A549 (cell line): ENCODE measurements at regions of chr22 and their contacts with region 1.

Region 1: DNA sequence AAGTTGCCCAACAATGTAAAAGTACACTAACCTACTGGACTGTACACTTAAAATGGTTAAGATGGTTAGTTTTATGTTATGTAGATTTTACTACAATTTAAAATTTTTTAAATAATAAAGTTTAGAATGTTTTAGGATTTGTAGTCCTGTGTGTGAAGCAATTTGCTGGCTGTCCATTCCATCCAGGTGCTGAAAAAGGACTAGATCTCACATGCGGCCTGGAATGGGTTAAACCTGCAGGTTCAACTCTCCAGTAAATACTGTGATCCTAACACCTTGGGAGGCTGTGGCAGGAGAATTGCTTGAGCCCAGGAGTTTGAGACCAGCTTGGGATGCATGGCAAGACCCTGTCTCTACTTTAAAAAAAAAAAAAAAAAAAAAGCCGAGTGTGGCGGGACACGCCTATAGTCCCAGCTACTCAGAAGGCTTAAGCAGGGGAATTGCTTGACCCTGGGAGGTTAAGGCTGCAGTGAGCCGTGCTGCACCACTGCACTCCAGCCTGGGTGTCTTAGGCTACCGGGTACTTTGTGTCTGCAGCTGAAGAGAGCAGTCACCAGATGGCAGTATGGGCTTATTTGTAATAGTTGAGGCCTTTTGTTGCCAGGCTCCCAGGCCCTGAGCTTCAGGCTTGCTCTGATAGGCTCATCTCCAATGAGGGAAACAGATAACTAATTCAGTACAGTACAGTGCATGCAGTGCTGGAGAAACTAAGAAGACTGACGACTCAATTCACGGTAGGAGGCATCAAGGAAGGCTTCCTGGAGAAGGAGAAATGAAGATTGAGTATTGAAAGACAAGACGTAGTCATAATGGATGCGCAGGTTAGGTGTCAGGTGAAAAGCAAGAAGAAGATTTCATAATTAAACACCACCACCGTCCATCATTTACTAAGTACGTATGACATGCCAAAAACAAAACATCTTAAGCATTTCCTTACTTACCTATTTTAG is 64.7 kb upstream of the ASPHD2 start:
- DNase-seq: peak; percentile 36 to 81
- ATAC-seq: peak; percentile 90 to 96
- H3K4me3 ChIP-seq: no peak overlapping the region
- H3K27ac ChIP-seq: no peak overlapping the region
- H3K4me1 ChIP-seq: no peaks in the 10 kb centered on the region
- CTCF ChIP-seq: peak; percentile 56
- EP300 ChIP-seq: no peak
- POLR2A ChIP-seq: no peak
- RAD21 ChIP-seq: peak; percentile 66 to 72

Region 2: GRCh38 chr22:26245001-26245400 is 119.3 kb before region 1 on chr22:
- CTCF ChIA-PET with region 1: no interaction called
- POLR2A ChIA-PET with region 1: no interaction called
- DNase-seq: no peak
- ATAC-seq: no peak
- H3K4me3 ChIP-seq: no peak overlapping the region
- H3K27ac ChIP-seq: no peak overlapping the region
- H3K4me1 ChIP-seq: no peaks in the 10 kb centered on the region
- CTCF ChIP-seq: no peak
- EP300 ChIP-seq: no peak
- POLR2A ChIP-seq: no peak
- RAD21 ChIP-seq: no peak

Region 3: GRCh38 chr22:26374391-26375026 is 10.2 kb after region 1 on chr22:
- CTCF ChIA-PET with region 1: interaction called, 25 read pairs
- POLR2A ChIA-PET with region 1: no interaction called
- DNase-seq: no peak
- ATAC-seq: no peak
- H3K4me3 ChIP-seq: no peak overlapping the region
- H3K27ac ChIP-seq: no peak overlapping the region
- H3K4me1 ChIP-seq: no peaks in the 10 kb centered on the region
- CTCF ChIP-seq: no peak
- EP300 ChIP-seq: no peak
- POLR2A ChIP-seq: no peak
- RAD21 ChIP-seq: no peak

Region 4: DNA sequence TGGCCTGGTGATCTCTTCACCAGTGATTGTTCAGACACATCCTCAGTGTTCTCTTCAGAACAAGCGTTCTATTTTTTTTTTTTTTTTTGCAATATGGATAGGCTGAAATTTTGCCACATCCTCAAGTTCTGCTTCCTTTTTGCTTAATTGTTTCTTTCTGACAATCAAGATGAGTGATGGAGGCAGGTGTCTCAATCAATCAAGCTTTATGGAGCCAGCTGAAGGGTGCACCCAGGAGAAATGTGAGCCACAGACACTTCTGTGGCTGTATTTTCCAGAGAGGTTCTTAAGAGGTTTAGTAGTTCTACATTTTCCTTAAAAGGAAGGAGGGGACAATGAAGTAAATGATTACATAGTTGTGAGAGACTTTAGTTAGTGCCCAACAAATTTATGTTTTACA is 20.8 kb after region 1 on chr22:
- CTCF ChIA-PET with region 1: interaction called, 18 read pairs
- POLR2A ChIA-PET with region 1: no interaction called
- DNase-seq: no peak
- ATAC-seq: no peak
- H3K4me3 ChIP-seq: no peak overlapping the region
- H3K27ac ChIP-seq: no peak overlapping the region
- H3K4me1 ChIP-seq: no peaks in the 10 kb centered on the region
- CTCF ChIP-seq: no peak
- EP300 ChIP-seq: no peak
- POLR2A ChIP-seq: no peak
- RAD21 ChIP-seq: no peak

Region 5: GRCh38 chr22:26398741-26399153 is 34.4 kb after region 1 on chr22:
- CTCF ChIA-PET with region 1: interaction called, 15 read pairs
- POLR2A ChIA-PET with region 1: no interaction called
- DNase-seq: peak; percentile 41 to 60
- ATAC-seq: peak; percentile 88 to 90; a peak in 5 of 6 replicates
- H3K4me3 ChIP-seq: no peak overlapping the region
- H3K27ac ChIP-seq: no peak overlapping the region
- H3K4me1 ChIP-seq: no peaks in the 10 kb centered on the region
- CTCF ChIP-seq: peak; percentile 63
- EP300 ChIP-seq: no peak
- POLR2A ChIP-seq: no peak
- RAD21 ChIP-seq: peak; percentile 81

Region 6: GRCh38 chr22:26404851-26405421 is 40.6 kb after region 1 on chr22:
- CTCF ChIA-PET with region 1: interaction called, 10 read pairs
- POLR2A ChIA-PET with region 1: no interaction called
- DNase-seq: no peak
- ATAC-seq: no peak
- H3K4me3 ChIP-seq: no peak overlapping the region
- H3K27ac ChIP-seq: no peak overlapping the region
- H3K4me1 ChIP-seq: no peaks in the 10 kb centered on the region
- CTCF ChIP-seq: no peak
- EP300 ChIP-seq: no peak
- POLR2A ChIP-seq: no peak
- RAD21 ChIP-seq: no peak

Region 7: GRCh38 chr22:26665813-26666231 is 301.5 kb after region 1 on chr22:
- CTCF ChIA-PET with region 1: interaction called, 10 read pairs
- POLR2A ChIA-PET with region 1: no interaction called
- DNase-seq: no peak
- ATAC-seq: no peak; a peak in 1 of 6 replicates
- H3K4me3 ChIP-seq: no peak overlapping the region
- H3K27ac ChIP-seq: 0 out of 6 replicates have a peak overlapping the region, but pooled peaks of 1 of the 2 experiments have one; percentile 13
- H3K4me1 ChIP-seq: peaks cover 12% of the 10 kb centered on the region; the same call in 2 of the 3 replicates
- CTCF ChIP-seq: no peak
- EP300 ChIP-seq: no peak
- POLR2A ChIP-seq: no peak
- RAD21 ChIP-seq: no peak